ENCODE measurements at regions of chr3 and their contacts with region 1.

Region 1: DNA sequence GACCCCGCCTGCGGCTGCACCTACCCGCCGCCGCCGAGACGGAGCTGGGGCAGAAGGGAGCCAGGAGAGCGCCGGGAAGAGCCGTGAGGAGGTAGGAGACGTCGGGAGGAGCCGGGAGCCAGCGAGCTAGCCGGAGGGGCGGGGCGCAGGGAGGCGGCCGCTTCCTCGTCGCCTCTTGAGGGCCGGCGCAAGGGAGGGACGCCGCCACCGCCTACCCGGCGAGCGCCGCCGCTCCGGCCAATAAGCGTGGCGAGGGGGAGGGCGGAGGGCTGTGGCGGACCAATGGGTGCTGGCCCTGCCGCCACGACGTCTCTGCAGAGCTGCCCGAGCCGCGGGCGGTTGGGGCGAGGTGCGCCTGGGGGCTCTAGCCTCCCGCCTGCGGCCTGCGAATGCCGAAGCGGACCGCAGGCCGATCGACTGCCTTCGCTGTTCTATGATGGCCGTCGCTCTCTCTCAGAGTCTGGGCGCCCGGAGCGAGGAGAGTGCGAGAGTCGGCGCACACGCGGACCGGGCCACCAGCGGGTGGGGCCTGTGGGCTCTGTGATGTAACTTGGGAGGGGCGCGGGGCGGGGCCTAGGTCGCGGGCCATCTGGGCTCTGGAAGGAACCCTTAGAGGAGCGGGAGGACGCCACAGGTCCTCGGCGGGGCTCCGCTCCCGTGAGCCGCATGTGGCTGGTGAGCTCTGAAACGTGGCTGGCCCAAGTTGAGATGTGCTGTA is 72.7 kb upstream of the MAP4 start:
- DNase-seq: peak; percentile 95 to 99 (median 98)
- ATAC-seq: peak; percentile 95
- H3K4me3 ChIP-seq: peak overlapping the region; percentile 95
- H3K27ac ChIP-seq: peak overlapping the region; percentile 97
- H3K4me1 ChIP-seq: peaks cover 14 to 25% of the 10 kb centered on the region in 2 experiments
- H3K27me3 ChIP-seq: no peaks in the 10 kb centered on the region
- CTCF ChIP-seq: no peak
- EP300 ChIP-seq: 0 out of 2 replicates have a peak, but pooled peaks have one; percentile 3
- POLR2A ChIP-seq: peak; percentile 98
- RAD21 ChIP-seq: no peak

Region 2: GRCh38 chr3:47989981-47990440 is 98.9 kb before region 1 on chr3:
- CTCF ChIA-PET with region 1: no interaction called
- POLR2A ChIA-PET with region 1: no interaction called
- in situ Hi-C with region 1: no loop called
- intact Hi-C with region 1: loop called (anchors 5 kb)
- DNase-seq: peak; percentile 78 to 89 (median 82)
- ATAC-seq: peak; percentile 98
- H3K4me3 ChIP-seq: no peak overlapping the region
- H3K27ac ChIP-seq: no peak overlapping the region
- H3K4me1 ChIP-seq: peaks cover 0 to 2% of the 10 kb centered on the region in 2 experiments; a peak in 1 of 5 replicates
- H3K27me3 ChIP-seq: no peaks in the 10 kb centered on the region
- CTCF ChIP-seq: peak; percentile 84 to 98 (median 97)
- EP300 ChIP-seq: no peak
- POLR2A ChIP-seq: no peak
- RAD21 ChIP-seq: peak; percentile 88 to 92

Region 3: GRCh38 chr3:48016301-48016973 is 72.5 kb before region 1 on chr3 and contains the start of gene MAP4:
- CTCF ChIA-PET with region 1: no interaction called
- POLR2A ChIA-PET with region 1: interaction called, 4 read pairs
- in situ Hi-C with region 1: no loop called
- intact Hi-C with region 1: loop called (anchors 5 kb)
- DNase-seq: peak; percentile 29 to 70 (median 42)
- ATAC-seq: peak; percentile 77
- H3K4me3 ChIP-seq: no peak within 1 kb of the TSS
- H3K27ac ChIP-seq: peak within 1 kb of the TSS; percentile 67
- H3K4me1 ChIP-seq: peaks cover 8 to 37% of the 10 kb centered on the region in 2 experiments; a peak in 3 of 5 replicates
- H3K27me3 ChIP-seq: no peaks in the 10 kb centered on the region
- CTCF ChIP-seq: no peak
- EP300 ChIP-seq: peak; percentile 29
- POLR2A ChIP-seq: no peak
- RAD21 ChIP-seq: no peak
- polyA plus RNA-seq, gene MAP4: 13.3 to 28.4 TPM

Region 4: DNA sequence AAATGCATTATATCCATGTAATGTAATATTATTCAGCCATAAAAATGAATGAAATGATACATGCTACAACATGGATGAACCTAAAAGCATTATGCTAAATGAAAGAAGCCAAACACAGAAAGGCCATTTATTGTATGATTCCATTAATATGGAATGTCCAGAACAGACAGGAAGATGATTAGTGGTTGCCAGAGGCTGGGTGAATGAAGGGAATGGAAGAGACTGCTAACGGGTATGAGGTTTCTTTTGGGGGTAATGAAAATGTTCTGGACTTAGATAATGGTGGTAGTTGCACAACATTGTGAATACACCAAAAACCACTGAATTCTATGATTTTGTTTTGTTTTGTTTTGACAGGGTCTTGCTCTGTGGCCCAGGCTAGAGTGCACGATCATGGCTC is 11.1 kb before region 1 on chr3:
- CTCF ChIA-PET with region 1: no interaction called
- POLR2A ChIA-PET with region 1: interaction called, 16 read pairs
- in situ Hi-C with region 1: no loop called
- intact Hi-C with region 1: no loop called
- DNase-seq: no peak
- ATAC-seq: peak; percentile 25; the same call in 2 of the 3 replicates
- H3K4me3 ChIP-seq: no peak overlapping the region
- H3K27ac ChIP-seq: no peak overlapping the region
- H3K4me1 ChIP-seq: peaks cover 4 to 6% of the 10 kb centered on the region in 2 experiments; a peak in 3 of 5 replicates
- H3K27me3 ChIP-seq: no peaks in the 10 kb centered on the region
- CTCF ChIP-seq: no peak
- EP300 ChIP-seq: no peak
- POLR2A ChIP-seq: no peak
- RAD21 ChIP-seq: no peak

Region 5: GRCh38 chr3:48157950-48158376 is 69.1 kb after region 1 on chr3:
- CTCF ChIA-PET with region 1: no interaction called
- POLR2A ChIA-PET with region 1: interaction called, 3 read pairs
- in situ Hi-C with region 1: no loop called
- intact Hi-C with region 1: loop called (anchors 5 kb)
- DNase-seq: peak; percentile 80 to 86 (median 82)
- ATAC-seq: peak; percentile 92
- H3K4me3 ChIP-seq: no peak overlapping the region
- H3K27ac ChIP-seq: no peak overlapping the region
- H3K4me1 ChIP-seq: peaks cover 0 to 12% of the 10 kb centered on the region in 2 experiments; a peak in 4 of 5 replicates
- H3K27me3 ChIP-seq: no peaks in the 10 kb centered on the region
- CTCF ChIP-seq: peak; percentile 87 to 96 (median 93)
- EP300 ChIP-seq: no peak
- POLR2A ChIP-seq: no peak; the same call in 1 of the 2 replicates
- RAD21 ChIP-seq: peak; percentile 59 to 75

Measured in K562 (cell line).